ENCODE measurements at regions of chr18 and their contacts with region 1.

Region 1: DNA sequence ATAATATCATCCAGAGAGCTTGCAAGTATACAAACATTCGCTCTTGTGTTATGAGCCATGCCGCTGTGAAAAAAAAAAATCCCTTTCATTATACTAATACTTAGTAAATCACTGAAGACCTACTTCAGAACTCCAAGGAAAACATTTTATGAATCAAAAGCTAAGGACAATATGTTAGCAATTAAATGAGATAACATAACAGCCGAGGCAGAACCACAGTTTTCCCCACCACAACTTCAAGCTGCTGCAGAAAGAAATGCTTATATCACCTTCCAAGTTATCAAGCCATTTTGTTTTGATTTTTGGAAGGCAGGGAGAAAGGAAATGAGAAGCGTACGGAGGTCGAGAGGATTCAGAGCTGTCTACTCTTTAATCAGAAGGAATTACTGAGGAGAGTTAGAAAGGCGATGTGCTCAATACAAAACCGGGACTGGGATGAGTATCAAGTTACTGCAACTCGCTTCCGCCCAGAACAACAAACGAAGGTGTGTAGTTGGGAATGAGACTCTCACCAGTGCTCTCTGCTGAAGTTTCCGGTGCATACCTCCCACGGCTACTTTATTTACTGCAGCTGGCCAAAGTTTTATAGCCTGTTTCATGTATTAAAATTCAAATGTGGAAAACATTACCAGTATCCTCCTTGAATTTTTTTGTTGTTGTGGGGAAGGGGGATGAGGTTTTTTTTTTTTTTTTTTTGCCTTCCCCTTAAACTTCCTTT is 292.2 kb upstream of the CCDC68 start:
- DNase-seq: no peak
- ATAC-seq: peak in 6 of 8 donors; percentile 63 to 81 (median 74)
- H3K4me3 ChIP-seq: peak overlapping the region in 1 of 10 donors; percentile 4
- H3K27ac ChIP-seq: peak overlapping the region; percentile 22 to 89 (median 66)
- H3K4me1 ChIP-seq: peaks cover 3 to 79% (median 56%) of the 10 kb centered on the region in 9 donors
- H3K27me3 ChIP-seq: no peaks in the 10 kb centered on the region
- CTCF ChIP-seq: no peak

Region 2: DNA sequence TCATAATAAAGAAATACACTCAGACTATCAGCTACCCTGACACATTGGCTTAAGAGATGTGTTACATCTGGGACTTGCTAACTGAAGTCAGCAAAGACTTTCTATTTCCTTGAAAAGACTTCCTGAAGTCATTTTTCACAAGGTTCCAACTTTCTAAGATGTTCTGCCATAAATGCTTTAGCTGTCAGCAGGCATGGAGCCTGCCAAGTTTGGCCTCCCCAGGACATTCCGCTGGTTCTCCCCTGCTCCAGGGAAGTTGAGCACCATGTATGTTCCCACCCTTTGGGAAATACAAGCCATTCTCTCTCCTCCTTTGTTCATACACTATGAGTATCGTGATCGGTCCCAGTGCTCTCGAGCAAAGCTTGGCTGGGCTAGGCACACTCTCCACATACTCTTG is 89.5 kb before region 1 on chr18:
- intact Hi-C with region 1: no loop called
- DNase-seq: no peak
- ATAC-seq: peak in 1 of 8 donors; percentile 33
- H3K4me3 ChIP-seq: no peak overlapping the region
- H3K27ac ChIP-seq: no peak overlapping the region
- H3K4me1 ChIP-seq: peaks cover 0 to 3% (median 0%) of the 10 kb centered on the region in 9 donors
- H3K27me3 ChIP-seq: no peaks in the 10 kb centered on the region
- CTCF ChIP-seq: no peak

Region 3: DNA sequence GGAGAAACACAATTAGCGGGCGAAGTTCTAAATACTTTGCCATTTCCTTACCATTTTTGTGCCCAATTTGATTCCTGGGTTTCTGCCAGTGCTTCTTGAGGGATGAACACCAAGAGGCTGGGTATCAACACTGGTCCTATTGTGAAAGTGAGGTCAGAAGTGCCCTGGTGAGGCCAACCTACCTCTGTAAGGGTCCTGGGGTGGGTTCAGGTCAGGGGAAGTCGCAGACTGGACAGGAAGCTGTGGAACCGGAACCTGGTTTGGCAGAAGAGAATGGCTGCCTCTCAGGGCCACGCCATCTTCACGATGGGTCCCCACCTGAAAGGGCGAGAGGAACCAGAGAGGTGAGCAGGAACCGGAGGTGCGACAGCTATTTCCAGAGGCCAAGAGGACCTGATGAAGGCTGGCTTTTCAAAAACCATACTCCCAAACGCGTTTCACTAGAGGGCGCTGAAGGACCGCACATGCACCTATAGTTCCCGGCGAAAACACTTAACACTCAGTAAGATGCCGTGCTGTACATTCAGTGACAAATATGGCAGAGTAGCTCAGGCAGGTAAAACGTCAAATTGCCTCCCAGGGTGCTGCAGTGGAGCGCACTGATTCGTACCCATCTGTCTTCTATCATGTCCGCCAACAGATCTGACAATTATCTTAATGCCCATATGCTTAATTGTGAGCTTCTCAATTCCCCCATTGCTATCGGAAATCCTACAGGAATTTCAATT is 16.9 kb before region 1 on chr18:
- intact Hi-C with region 1: no loop called
- DNase-seq: peak; percentile 60 to 85
- ATAC-seq: peak; percentile 59 to 92 (median 86)
- H3K4me3 ChIP-seq: peak overlapping the region in 1 of 10 donors; percentile 3
- H3K27ac ChIP-seq: peak overlapping the region; percentile 39 to 89 (median 62)
- H3K4me1 ChIP-seq: peaks cover 3 to 63% (median 42%) of the 10 kb centered on the region in 9 donors
- H3K27me3 ChIP-seq: no peaks in the 10 kb centered on the region
- CTCF ChIP-seq: peak; percentile 59 to 84 (median 76)

Region 4: DNA sequence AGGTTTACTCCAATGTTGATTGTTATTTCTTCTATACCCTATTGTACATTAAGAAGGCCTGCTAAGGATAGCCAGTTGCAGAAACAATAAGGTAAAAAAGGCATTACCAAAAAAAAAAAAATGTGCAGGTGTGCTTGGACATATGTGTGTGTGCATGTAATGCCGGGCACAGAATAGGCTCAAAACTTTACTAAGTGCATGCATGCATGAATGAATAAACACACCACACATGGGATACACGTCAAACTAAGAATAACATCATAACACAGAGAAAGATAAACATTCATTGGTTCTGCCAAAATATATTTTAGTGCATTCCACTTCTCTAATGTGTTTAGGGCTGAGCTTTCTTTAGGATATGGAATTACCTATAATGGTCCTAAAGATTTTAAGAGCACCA is 38.4 kb after region 1 on chr18:
- intact Hi-C with region 1: loop called in 1 of 10 experiments (anchors 5 kb)
- DNase-seq: no peak
- ATAC-seq: no peak
- H3K4me3 ChIP-seq: no peak overlapping the region
- H3K27ac ChIP-seq: peak overlapping the region in 1 of 10 donors; percentile 5
- H3K4me1 ChIP-seq: peaks cover 4 to 99% (median 65%) of the 10 kb centered on the region in 9 donors
- H3K27me3 ChIP-seq: no peaks in the 10 kb centered on the region
- CTCF ChIP-seq: no peak

Measured in heart right ventricle (tissue), 16 donors.